CD4-positive, alpha-beta T cell (primary cell): ENCODE measurements at regions of chr20 and their contacts with region 1.

Region 1: DNA sequence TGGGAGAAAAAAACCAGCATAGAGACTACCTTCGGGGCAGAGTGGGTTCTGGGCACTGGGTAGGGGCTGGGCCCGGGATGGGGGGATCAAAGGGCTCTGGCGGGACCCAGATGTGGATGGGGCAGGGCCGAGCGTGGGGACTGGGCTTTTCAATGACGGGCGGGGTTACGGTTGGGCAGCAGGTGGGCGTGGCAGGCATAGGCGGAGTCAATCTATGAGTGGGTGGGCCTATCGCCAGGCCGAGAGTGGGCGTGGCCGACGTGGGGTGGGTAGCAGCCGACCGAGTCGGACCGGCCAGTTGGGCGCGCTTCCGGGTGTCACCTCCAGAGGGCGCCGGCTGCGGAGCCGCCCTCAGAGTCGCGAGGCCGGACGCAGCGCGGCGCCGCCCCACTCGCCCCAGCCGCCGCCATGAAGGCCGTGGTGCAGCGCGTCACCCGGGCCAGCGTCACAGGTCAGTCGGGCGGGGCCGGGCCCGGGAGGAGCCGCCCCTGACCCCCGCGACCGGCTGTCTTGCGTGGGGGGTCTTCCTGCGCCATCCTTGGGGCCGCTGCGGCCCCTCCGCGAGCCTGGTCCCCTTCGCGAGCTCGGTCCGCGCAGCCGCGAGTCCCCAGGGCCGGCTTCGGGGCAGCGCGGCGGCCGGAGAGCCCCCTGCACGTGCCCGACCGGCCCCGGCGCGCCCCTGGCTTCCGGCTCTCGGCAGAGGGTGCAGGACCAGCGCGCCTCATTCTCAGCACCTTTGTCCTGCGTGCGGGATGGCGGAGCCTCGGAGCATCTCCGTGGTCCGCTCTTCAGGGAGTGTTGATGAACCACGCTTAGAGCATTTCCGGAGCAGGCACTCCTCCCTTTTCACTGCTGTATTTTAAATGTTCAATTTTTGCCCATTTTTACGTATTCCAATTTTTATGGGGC is at the start of gene DTD1:
- DNase-seq: peak; percentile 56 to 89 (median 74)
- ATAC-seq: peak; percentile 75
- H3K4me3 ChIP-seq: peak within 1 kb of the TSS; percentile 63
- H3K4me3 Mint-ChIP-seq: peak within 1 kb of the TSS; percentile 89
- H3K27ac ChIP-seq: peak within 1 kb of the TSS; percentile 38 to 56
- H3K27ac Mint-ChIP-seq: peak within 1 kb of the TSS; percentile 90
- H3K4me1 ChIP-seq: peaks cover 17% of the 10 kb centered on the region
- H3K4me1 Mint-ChIP-seq: peaks cover 23% of the 10 kb centered on the region
- H3K27me3 ChIP-seq: no peaks in the 10 kb centered on the region
- H3K27me3 Mint-ChIP-seq: peaks cover 8% of the 10 kb centered on the region
- CTCF ChIP-seq: peak; percentile 44
- total RNA-seq, gene DTD1: 15.4 to 16.1 TPM

Region 2: GRCh38 chr20:18566892-18567742 is 20.8 kb before region 1 on chr20 and contains the start of gene SMIM26:
- CTCF ChIA-PET with region 1: interaction called, 3 read pairs
- POLR2A ChIA-PET with region 1: interaction called, 4 read pairs
- intact Hi-C with region 1: loop called (anchors 2 kb)
- DNase-seq: peak; percentile 90 to 97 (median 94)
- ATAC-seq: peak; percentile 99
- H3K4me3 ChIP-seq: peak within 1 kb of the TSS; percentile 91
- H3K4me3 Mint-ChIP-seq: peak within 1 kb of the TSS; percentile 99
- H3K27ac ChIP-seq: peak within 1 kb of the TSS; percentile 82 to 94
- H3K27ac Mint-ChIP-seq: peak within 1 kb of the TSS; percentile 100
- H3K4me1 ChIP-seq: peaks cover 20% of the 10 kb centered on the region
- H3K4me1 Mint-ChIP-seq: peaks cover 28% of the 10 kb centered on the region
- H3K27me3 ChIP-seq: no peaks in the 10 kb centered on the region
- H3K27me3 Mint-ChIP-seq: no peaks in the 10 kb centered on the region
- CTCF ChIP-seq: no peak
- total RNA-seq, gene SMIM26: 78.7 to 79.8 TPM